ENCODE measurements at regions of chrX and their contacts with region 1.

Region 1: DNA sequence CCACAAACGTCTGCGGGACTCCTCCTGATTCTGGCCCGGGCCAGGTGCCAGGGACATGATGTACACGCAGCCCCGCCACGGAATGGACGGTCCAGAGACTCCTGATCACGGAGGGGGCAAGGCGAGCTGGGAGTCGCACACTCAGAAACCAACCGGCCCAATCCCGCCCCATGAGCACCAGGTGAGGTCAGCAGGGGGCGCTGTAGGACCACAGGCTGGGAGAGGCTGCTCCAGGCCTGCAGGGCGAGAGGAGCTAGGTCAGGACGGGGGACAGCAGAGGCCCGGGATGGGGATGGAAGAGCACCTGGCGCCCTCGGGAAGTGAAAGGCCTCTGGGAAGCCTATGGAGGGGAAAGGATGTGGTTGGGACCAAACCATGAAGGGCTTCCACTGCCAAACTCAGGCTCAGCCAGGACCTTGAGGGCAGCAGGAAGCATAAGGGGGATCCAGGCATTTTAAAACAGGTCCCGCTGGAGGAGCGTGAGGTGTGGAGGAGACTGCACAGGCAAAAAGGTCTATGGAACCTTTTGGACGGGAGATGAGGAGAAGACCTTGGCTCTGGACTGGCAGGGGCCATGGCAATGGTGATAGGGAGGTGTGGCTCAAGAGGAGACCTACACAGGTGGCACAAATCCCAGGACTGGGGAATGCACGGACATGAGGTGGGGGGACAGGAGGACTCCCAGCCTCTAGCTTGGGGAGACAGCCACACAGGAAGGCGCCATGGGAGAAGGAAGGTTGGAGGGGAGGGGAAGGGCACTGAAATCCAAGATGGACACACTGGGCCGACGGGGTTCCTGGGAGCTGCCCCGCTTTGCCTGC is 79.2 kb downstream of the MTMR1 start:
- DNase-seq: peak; percentile 13
- ATAC-seq: peak; percentile 98
- H3K4me3 ChIP-seq: no peak overlapping the region
- H3K27ac ChIP-seq: no peak overlapping the region
- H3K4me1 ChIP-seq: no peaks in the 10 kb centered on the region
- H3K27me3 ChIP-seq: no peaks in the 10 kb centered on the region
- CTCF ChIP-seq: peak; percentile 71 to 80 (median 74)
- POLR2A ChIP-seq: no peak
- RAD21 ChIP-seq: peak; percentile 91

Region 2: DNA sequence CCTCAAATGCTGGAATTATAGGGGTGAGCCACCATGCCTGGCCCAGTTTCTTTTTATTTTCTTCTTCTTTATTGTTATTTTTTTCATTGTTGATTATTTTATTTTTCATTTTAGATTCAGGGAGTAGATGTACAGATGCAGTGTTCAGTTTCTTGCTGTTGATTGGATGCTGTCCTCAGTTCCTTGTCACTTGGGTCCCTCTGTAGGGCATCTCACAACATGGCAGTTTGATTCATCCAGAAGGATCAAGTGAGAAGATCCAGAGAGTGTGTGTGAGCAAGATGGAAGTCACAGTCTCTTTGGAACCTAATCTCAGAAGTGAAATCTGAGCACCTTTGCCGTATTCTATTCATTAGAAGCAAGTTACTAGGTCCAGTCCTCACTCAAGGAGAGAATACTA is 231.7 kb after region 1 on chrX:
- CTCF ChIA-PET with region 1: interaction called, 3 read pairs
- POLR2A ChIA-PET with region 1: no interaction called
- RAD21 ChIA-PET with region 1: no interaction called
- intact Hi-C with region 1: loop called (anchors 1 kb)
- DNase-seq: no peak
- ATAC-seq: no peak; the same call in 1 of the 2 replicates
- H3K4me3 ChIP-seq: no peak overlapping the region
- H3K27ac ChIP-seq: no peak overlapping the region
- H3K4me1 ChIP-seq: no peaks in the 10 kb centered on the region
- H3K27me3 ChIP-seq: no peaks in the 10 kb centered on the region
- CTCF ChIP-seq: 0 out of 6 replicates have a peak, but pooled peaks of 2 of the 3 experiments have one; percentile 9 to 12
- POLR2A ChIP-seq: no peak
- RAD21 ChIP-seq: peak; percentile 34

Region 3: DNA sequence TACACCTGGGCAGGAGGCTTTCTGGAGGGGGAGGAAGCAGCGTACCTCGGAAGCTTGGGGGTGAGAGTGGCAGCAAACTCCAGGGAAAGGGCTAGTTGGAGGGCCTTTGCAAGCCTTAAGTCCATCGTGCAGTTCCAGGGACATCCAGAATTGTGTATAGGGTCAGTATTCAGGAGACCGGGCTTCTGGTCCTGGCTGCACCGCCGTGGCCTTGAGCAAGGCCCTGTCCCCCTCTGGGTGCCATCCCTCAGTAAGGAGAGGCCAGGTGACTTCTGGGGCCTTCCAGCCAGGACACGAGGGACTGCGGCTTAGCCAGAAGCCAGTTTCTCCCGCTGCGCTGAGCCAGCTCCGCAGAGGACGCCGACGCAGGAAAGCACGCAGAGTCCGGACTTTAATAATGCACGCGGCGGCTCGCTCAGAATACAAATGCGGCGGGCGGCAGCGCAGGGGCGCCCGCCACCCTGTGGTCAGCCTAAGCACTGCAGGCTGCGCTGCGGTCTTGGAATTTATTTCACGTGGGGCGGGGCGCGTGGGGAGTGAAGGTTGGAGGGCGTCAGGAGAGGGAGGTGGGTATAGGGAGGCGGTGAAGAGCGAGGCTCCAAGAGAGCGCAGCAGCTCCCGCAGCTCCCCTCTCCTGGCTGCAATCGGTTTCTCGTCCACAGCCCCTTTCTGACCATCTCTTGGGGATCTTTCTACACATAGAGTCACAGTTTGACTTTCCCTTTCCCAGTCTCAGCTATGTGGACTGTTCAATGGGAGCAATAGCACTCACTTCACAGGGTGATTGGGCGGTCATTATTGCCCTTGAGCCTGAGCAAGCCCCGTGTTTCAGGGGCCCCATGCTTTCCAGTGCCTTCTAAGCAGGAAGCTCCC is 310.0 kb after region 1 on chrX:
- CTCF ChIA-PET with region 1: interaction called, 72 read pairs
- POLR2A ChIA-PET with region 1: no interaction called
- RAD21 ChIA-PET with region 1: interaction called, 9 to 16 read pairs
- intact Hi-C with region 1: loop called (anchors 1 kb)
- DNase-seq: peak; percentile 6
- ATAC-seq: peak; percentile 95
- H3K4me3 ChIP-seq: peak overlapping the region in 1 of 2 experiments; percentile 8; a peak in 1 of 4 replicates
- H3K27ac ChIP-seq: no peak overlapping the region
- H3K4me1 ChIP-seq: peaks cover 3 to 7% of the 10 kb centered on the region in 2 experiments; a peak in 1 of 4 replicates
- H3K27me3 ChIP-seq: peaks cover 6% of the 10 kb centered on the region; the same call in 1 of the 2 replicates
- CTCF ChIP-seq: peak; percentile 63 to 73 (median 67)
- POLR2A ChIP-seq: no peak
- RAD21 ChIP-seq: peak; percentile 81

Region 4: GRCh38 chrX:151680805-151681204 is 908.4 kb after region 1 on chrX:
- CTCF ChIA-PET with region 1: no interaction called
- POLR2A ChIA-PET with region 1: no interaction called
- RAD21 ChIA-PET with region 1: no interaction called
- intact Hi-C with region 1: loop called (anchors 5 kb)
- DNase-seq: peak; percentile 32
- ATAC-seq: peak; percentile 86
- H3K4me3 ChIP-seq: no peak overlapping the region
- H3K27ac ChIP-seq: no peak overlapping the region
- H3K4me1 ChIP-seq: no peaks in the 10 kb centered on the region
- H3K27me3 ChIP-seq: peaks cover 5% of the 10 kb centered on the region; the same call in 1 of the 2 replicates
- CTCF ChIP-seq: peak; percentile 48 to 56 (median 54)
- POLR2A ChIP-seq: no peak
- RAD21 ChIP-seq: peak; percentile 77